Activated CD8-positive, alpha-beta T cell treated with anti-CD3 and anti-CD28 coated beads, Interleukin-2, amount 10 ng/mL, durations not matched to agents 7 days and 5 days (primary cell): ENCODE measurements at regions of chr10 and their contacts with region 1.

Region 1: GRCh38 chr10:95864906-95865813 is 42.6 kb upstream of the CC2D2B start:
- DNase-seq: peak; percentile 72
- ATAC-seq: peak; percentile 90
- H3K4me3 Mint-ChIP-seq: no peak overlapping the region
- H3K27ac Mint-ChIP-seq: peak overlapping the region; percentile 74
- H3K4me1 Mint-ChIP-seq: peaks cover 36% of the 10 kb centered on the region
- H3K27me3 Mint-ChIP-seq: no peaks in the 10 kb centered on the region

Region 2: DNA sequence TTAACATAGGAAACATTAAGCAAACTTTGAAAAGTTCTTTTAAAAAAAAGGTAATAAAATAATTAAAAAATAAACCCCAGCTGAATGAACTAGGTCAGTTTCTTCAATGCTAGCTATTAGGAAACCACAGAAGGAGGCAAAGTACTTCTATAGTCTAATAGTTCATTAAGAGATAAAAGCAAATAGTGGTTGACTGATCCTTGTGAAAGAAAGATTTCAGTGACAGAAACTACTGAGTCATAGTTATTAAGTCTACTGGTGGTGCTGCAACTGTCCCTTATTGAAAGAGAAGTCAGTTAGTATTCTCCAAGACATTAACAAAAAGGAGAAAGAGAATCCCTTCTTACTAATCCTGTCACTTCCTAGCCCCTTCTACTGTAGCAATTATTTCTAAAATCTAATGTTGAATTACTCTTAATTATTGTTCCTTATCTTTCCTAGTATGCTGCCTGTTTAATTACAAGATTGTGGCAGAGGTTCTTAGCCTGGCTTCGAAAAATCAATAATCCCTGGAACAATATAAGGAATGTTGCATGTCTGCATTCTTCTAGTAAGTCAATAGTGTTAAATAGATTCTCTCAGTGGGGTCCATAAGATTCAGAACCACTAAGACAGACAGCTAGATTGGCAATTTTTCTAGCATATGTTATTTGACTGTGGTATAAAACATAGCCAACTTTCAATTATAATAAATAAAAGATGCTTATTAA is 189.6 kb before region 1 on chr10:
- CTCF ChIA-PET with region 1: interaction called, 10 read pairs
- POLR2A ChIA-PET with region 1: no interaction called
- DNase-seq: no peak
- ATAC-seq: no peak
- H3K4me3 Mint-ChIP-seq: no peak overlapping the region
- H3K27ac Mint-ChIP-seq: no peak overlapping the region
- H3K4me1 Mint-ChIP-seq: no peaks in the 10 kb centered on the region
- H3K27me3 Mint-ChIP-seq: no peaks in the 10 kb centered on the region

Region 3: GRCh38 chr10:95741807-95742467 is 123.2 kb before region 1 on chr10:
- CTCF ChIA-PET with region 1: interaction called, 15 read pairs
- POLR2A ChIA-PET with region 1: no interaction called
- DNase-seq: no peak
- ATAC-seq: no peak
- H3K4me3 Mint-ChIP-seq: no peak overlapping the region
- H3K27ac Mint-ChIP-seq: no peak overlapping the region
- H3K4me1 Mint-ChIP-seq: peaks cover 29% of the 10 kb centered on the region
- H3K27me3 Mint-ChIP-seq: peaks cover 2% of the 10 kb centered on the region

Region 4: DNA sequence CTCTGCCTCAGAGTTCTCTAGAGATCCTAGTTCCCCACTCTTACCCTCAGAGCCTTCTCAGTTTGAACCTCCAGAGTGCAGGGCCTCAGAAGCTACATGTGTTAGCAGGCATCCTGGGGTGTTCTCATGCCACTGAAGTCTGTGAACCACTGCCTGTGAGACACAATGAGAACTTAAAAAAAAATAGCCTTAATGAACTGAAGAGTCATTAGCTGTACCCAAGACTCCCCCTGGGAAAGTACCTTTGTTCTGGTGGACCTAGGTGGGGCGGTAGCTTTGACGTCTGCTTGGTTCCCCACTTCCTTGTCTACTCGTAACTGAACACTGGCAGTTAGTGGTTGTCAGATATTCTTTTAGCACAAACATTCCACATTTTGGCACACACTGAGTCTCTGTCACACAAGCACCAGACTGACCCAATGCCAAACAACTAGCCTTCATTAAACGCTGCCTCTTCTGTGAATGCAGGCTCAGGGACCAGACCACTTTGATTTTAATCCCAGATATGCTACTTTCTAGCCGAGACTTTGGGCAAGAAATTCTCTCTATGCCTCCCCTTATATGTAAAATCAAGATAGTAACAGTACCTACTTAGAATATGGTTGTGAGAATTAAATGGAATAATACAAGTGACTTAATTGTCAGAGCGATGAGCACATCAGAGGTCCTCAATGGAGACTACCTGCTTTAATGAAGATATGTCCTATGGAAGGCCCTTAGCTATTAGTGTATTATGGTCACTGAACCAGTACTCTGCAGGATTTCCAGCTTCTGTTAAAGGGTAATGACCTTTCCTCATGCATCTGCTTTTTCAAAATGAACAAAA is 32.7 kb before region 1 on chr10:
- CTCF ChIA-PET with region 1: interaction called, 185 read pairs
- POLR2A ChIA-PET with region 1: interaction called, 5 read pairs
- DNase-seq: peak; percentile 74
- ATAC-seq: peak; percentile 91
- H3K4me3 Mint-ChIP-seq: peak overlapping the region; percentile 70
- H3K27ac Mint-ChIP-seq: peak overlapping the region; percentile 96
- H3K4me1 Mint-ChIP-seq: peaks cover 69% of the 10 kb centered on the region
- H3K27me3 Mint-ChIP-seq: no peaks in the 10 kb centered on the region

Region 5: DNA sequence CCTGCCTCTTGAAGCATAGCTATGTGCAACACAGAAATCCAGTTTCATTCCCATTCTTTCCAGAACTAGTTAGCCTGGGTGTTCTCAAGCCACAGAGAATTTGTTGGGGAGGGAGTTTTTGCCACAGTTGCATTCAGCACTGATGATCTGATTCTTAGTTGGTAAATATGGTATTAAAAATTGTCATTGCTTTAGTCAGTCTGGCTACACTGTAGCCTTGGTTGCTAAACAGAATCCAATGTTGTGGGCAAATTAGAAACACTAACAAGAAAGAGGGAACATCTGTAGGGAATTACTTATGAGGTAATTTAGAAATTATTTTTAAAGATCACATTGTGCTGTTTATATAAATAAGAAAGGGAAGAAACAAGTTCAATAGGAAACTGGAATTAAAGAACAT is 14.4 kb before region 1 on chr10:
- CTCF ChIA-PET with region 1: interaction called, 185 read pairs
- POLR2A ChIA-PET with region 1: interaction called, 5 read pairs
- DNase-seq: no peak
- ATAC-seq: no peak
- H3K4me3 Mint-ChIP-seq: no peak overlapping the region
- H3K27ac Mint-ChIP-seq: no peak overlapping the region
- H3K4me1 Mint-ChIP-seq: peaks cover 1% of the 10 kb centered on the region
- H3K27me3 Mint-ChIP-seq: peaks cover 9% of the 10 kb centered on the region